ENCODE measurements at regions of chr14 and their contacts with region 1.

Region 1: DNA sequence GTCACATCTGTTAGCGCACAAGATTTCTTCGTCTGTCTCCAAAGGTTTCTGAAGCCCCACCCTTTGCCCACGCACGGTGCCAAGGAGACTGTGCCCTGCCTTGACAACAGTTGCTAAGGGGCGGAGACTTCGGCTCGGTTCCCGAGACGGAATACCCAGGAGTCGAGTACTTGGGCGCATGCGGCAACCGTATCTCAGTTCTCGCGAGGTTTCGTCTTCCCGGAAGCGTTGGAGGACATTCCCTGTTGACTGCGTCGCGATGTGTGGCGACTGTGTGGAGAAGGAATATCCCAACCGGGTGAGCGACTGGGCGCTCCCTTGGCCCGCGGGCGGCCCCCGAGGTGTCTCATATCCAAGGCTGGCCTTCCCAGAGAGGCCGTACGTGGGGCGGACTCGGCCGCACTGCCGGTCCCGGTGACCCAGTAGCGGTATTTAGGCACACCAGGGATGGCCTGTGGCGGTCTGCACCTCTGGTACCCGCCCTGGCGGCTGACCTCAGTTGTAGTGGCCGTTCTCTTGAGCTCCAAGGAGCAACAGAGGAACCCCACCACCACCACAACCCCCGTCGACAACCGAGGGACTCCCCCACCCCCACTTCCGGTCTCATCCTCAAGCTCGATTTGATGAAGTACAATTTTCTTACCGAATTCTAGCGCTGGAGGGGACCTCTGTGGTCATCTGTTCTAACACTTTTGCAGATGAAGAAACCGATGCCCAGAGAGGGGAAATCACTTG is at the start of gene CHURC1:
- DNase-seq: peak; percentile 97
- H3K4me3 ChIP-seq: peak within 1 kb of the TSS; percentile 91
- H3K27ac ChIP-seq: peak within 1 kb of the TSS; percentile 52
- H3K4me1 ChIP-seq: peaks cover 16% of the 10 kb centered on the region
- CTCF ChIP-seq: no peak
- total RNA-seq, gene CHURC1: 33.0 and 34.0 TPM in 2 replicates

Region 2: DNA sequence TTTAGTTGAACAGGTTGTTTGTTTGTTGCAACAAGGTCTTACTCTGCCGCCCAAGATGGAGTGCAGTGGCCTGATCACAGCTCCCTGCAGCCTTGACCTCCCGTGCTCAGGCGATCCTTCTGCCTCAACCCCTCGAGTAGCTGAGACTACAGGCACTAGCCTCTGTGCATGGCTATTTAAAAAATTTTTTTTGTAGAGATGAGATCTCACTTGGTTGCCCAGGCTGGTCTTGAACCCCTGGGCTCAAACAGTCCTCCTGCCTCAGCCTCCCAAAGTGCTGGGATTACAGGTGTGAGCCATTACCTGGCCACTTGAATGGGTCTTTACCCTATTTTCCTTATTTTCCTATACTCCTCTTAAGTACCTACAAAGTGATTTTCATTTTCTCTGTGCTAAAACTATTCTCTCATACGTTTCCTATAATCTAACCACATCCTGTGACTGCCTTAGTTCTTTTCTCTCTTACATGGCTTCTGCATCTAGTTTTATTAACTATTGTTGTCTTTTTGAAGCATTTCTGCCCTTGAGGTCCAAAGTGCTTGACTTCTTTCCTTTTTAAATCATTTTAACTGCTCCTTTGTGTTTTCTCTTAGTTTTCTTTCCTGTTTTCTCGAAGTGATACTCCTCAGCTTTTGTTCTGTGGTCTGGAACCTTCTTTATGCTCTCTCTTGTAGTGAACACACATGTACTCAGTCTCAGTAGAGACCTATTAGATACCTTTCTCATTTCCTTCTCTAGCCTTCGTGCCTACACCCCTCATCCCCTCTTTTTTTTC is 14.0 kb after region 1 on chr14:
- CTCF ChIA-PET with region 1: no interaction called
- POLR2A ChIA-PET with region 1: interaction called, 14 read pairs
- intact Hi-C with region 1: no loop called
- DNase-seq: peak; percentile 14
- H3K4me3 ChIP-seq: no peak overlapping the region
- H3K27ac ChIP-seq: peak overlapping the region; percentile 38
- H3K4me1 ChIP-seq: peaks cover 13% of the 10 kb centered on the region
- CTCF ChIP-seq: no peak

Region 3: GRCh38 chr14:64971943-64972791 is 57.8 kb after region 1 on chr14 and contains the start of gene RAB15:
- CTCF ChIA-PET with region 1: no interaction called
- POLR2A ChIA-PET with region 1: no interaction called
- intact Hi-C with region 1: no loop called
- DNase-seq: peak; percentile 14
- H3K4me3 ChIP-seq: peak within 1 kb of the TSS; percentile 59
- H3K27ac ChIP-seq: no peak within 1 kb of the TSS
- H3K4me1 ChIP-seq: peaks cover 11% of the 10 kb centered on the region
- CTCF ChIP-seq: no peak
- total RNA-seq, gene RAB15: 0.38 and 1.2 TPM in 2 replicates

Measured in OCI-LY7 (cell line).